ENCODE measurements at regions of chr19 and their contacts with region 1.

Region 1: DNA sequence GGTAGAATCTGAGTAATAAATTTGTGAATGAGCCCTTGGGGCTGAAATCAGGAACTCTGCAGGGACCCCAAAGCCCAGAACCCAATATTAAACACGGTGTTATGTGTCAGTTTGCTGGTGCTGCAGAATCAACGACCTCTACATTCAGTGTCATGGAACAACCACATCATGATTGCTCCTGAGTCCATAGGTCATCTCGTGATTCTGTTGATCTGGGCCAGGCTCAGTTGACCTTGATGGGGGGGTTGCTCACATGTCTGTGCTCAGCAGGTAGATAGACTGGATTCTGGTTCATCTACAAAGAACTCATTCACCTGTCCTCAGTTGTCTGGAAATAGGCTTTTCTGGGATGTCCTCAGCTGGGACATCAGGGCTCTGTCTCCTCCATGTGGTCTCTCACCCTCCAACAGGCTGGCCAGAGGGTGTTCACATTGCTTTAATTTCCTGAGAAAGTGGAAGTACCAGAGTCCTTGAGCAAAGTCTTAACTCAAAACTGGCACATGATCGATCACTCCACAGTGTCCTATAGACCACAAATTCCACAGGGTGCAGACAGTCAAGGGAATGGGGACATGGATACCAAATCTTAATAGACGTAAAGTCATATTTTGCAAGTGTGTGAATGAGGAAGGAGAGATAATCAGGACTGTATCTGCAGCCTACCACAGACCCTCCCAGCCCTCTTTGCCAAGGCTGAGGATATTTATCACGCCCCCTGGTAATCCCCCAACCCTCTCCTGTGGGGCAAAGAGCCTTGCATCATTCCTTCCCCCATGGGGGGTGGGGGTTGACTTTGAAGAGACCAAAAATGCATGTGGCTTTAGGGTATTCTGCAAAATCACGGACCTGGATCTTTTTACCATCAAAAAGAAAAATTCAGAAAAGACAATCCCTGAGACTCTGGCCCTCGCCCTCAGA is 39.3 kb upstream of the IGFL1 start:
- DNase-seq: no peak
- H3K4me3 Mint-ChIP-seq: no peak overlapping the region
- H3K27ac Mint-ChIP-seq: no peak overlapping the region
- H3K4me1 Mint-ChIP-seq: peaks cover 5% of the 10 kb centered on the region
- H3K27me3 Mint-ChIP-seq: peaks cover 27% of the 10 kb centered on the region

Region 2: DNA sequence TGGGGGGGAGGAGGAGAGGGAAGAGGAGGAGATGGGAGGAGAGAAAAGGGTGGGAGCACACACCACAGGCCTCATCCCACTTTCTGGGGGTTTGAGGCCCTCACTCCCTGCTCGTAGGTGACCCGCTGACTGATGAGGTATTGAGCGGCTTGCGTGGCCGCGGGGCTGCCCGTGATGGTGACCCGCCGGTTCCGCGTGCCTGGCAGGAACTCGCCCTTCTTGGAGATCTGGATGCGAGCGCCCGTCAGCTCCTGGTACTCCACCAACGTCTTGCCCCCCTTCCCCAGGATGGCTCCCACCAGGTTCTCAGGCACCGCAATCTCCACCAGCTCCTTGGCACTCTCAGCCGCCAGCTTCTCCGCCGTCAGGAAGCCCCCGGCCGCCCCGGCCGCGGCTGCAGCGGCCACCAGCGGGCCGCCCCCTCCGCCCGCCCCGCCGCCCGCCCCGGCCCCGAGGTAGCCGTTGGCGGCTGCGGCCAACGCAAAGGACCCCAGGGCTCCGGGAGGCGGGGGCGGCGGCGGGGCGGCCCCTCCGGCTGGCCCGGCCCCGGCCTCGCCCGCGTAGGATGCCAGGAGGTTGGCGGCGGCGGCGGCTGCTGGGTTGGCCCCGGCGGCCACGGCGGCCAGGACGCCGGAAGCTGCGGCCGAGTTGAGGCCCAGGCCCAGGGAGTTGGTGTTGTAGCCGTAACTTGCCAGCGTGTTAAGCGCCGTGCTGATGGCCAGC is 250.3 kb before region 1 on chr19:
- intact Hi-C with region 1: no loop called
- DNase-seq: no peak
- H3K4me3 Mint-ChIP-seq: no peak overlapping the region
- H3K27ac Mint-ChIP-seq: no peak overlapping the region
- H3K4me1 Mint-ChIP-seq: no peaks in the 10 kb centered on the region
- H3K27me3 Mint-ChIP-seq: peaks cover 25% of the 10 kb centered on the region

Region 3: GRCh38 chr19:46030812-46031550 is 159.2 kb before region 1 on chr19:
- intact Hi-C with region 1: loop called (anchors 1 kb)
- DNase-seq: no peak
- H3K4me3 Mint-ChIP-seq: no peak overlapping the region
- H3K27ac Mint-ChIP-seq: no peak overlapping the region
- H3K4me1 Mint-ChIP-seq: peaks cover 14% of the 10 kb centered on the region
- H3K27me3 Mint-ChIP-seq: peaks cover 24% of the 10 kb centered on the region

Region 4: GRCh38 chr19:46090444-46090843 is 99.8 kb before region 1 on chr19:
- intact Hi-C with region 1: no loop called
- DNase-seq: no peak
- H3K4me3 Mint-ChIP-seq: no peak overlapping the region
- H3K27ac Mint-ChIP-seq: no peak overlapping the region
- H3K4me1 Mint-ChIP-seq: no peaks in the 10 kb centered on the region
- H3K27me3 Mint-ChIP-seq: peaks cover 18% of the 10 kb centered on the region